A549 (cell line): ENCODE measurements at regions of chr11 and their contacts with region 1.

Region 1: DNA sequence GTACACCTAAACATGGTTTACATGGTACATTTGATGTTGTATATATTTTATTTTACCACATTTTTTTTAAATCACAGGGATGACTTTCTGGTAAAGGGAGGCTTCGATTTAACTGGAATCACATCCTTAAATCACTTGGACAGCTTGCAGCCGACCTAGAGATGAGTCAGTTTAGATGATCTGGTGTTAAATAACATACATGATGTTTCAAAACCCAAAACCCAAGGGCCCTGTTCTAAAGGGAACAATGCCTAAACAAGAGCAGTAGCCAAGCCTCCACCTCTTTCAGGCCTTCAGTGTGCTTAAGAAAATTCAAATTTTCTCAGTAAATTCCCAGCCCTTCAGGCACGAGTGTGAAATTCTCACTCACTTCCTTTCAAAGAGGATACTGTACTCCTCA is 108.8 kb downstream of the WT1 start:
- DNase-seq: no peak
- ATAC-seq: no peak
- H3K4me3 ChIP-seq: no peak overlapping the region
- H3K27ac ChIP-seq: no peak overlapping the region
- H3K4me1 ChIP-seq: no peaks in the 10 kb centered on the region
- CTCF ChIP-seq: no peak
- EP300 ChIP-seq: no peak
- POLR2A ChIP-seq: no peak
- RAD21 ChIP-seq: no peak

Region 2: DNA sequence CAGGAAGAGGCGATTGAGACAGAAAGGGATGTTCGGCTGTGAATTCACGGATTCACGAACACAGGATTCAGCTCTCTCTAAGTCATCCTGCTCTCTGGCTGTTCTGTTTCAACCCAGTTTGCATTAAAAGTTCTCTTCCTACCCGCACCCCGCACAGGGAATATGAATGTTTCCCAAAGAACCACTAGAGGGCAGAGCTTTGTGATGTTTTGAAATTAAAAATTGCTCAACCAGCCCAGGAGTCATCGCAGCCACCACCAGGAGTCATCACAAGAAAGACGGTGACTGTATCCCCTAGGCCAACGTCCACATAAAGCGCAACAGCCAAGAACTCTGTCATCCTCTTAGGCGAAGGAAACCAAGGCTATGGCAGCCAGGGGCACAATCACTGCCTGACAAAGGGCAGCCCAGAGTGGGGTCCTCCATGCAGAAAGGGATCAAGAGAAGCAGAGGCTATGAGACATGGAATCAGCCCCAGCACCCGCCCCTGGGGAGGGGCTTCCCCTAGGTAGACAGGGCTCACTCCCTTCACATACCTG is 13.6 kb before region 1 on chr11:
- CTCF ChIA-PET with region 1: interaction called, 83 read pairs
- POLR2A ChIA-PET with region 1: interaction called, 5 read pairs
- DNase-seq: peak; percentile 79 to 88
- ATAC-seq: peak; percentile 89 to 94
- H3K4me3 ChIP-seq: peak overlapping the region; percentile 18; the same call in 1 of the 3 replicates
- H3K27ac ChIP-seq: peak overlapping the region; percentile 80 to 87
- H3K4me1 ChIP-seq: peaks cover 41% of the 10 kb centered on the region
- CTCF ChIP-seq: peak; percentile 91
- EP300 ChIP-seq: no peak
- POLR2A ChIP-seq: no peak
- RAD21 ChIP-seq: peak; percentile 44 to 54

Region 3: GRCh38 chr11:32343325-32344008 is 16.9 kb after region 1 on chr11:
- CTCF ChIA-PET with region 1: interaction called, 20 read pairs
- POLR2A ChIA-PET with region 1: no interaction called
- DNase-seq: no peak
- ATAC-seq: no peak
- H3K4me3 ChIP-seq: no peak overlapping the region
- H3K27ac ChIP-seq: no peak overlapping the region
- H3K4me1 ChIP-seq: peaks cover 9% of the 10 kb centered on the region; the same call in 2 of the 3 replicates
- CTCF ChIP-seq: no peak
- EP300 ChIP-seq: no peak
- POLR2A ChIP-seq: no peak
- RAD21 ChIP-seq: no peak

Region 4: GRCh38 chr11:32792948-32793475 is 466.5 kb after region 1 on chr11:
- CTCF ChIA-PET with region 1: interaction called, 10 read pairs
- POLR2A ChIA-PET with region 1: no interaction called
- DNase-seq: peak; percentile 31
- ATAC-seq: peak; percentile 91 to 94
- H3K4me3 ChIP-seq: peak overlapping the region; percentile 18; the same call in 1 of the 3 replicates
- H3K27ac ChIP-seq: no peak overlapping the region
- H3K4me1 ChIP-seq: 0 out of 3 replicates have a peak, but pooled peaks cover 3% of the 10 kb centered on the region
- CTCF ChIP-seq: peak; percentile 95
- EP300 ChIP-seq: no peak
- POLR2A ChIP-seq: no peak
- RAD21 ChIP-seq: peak; percentile 82 to 90